ENCODE measurements at regions of chr16 and their contacts with region 1.

Region 1: DNA sequence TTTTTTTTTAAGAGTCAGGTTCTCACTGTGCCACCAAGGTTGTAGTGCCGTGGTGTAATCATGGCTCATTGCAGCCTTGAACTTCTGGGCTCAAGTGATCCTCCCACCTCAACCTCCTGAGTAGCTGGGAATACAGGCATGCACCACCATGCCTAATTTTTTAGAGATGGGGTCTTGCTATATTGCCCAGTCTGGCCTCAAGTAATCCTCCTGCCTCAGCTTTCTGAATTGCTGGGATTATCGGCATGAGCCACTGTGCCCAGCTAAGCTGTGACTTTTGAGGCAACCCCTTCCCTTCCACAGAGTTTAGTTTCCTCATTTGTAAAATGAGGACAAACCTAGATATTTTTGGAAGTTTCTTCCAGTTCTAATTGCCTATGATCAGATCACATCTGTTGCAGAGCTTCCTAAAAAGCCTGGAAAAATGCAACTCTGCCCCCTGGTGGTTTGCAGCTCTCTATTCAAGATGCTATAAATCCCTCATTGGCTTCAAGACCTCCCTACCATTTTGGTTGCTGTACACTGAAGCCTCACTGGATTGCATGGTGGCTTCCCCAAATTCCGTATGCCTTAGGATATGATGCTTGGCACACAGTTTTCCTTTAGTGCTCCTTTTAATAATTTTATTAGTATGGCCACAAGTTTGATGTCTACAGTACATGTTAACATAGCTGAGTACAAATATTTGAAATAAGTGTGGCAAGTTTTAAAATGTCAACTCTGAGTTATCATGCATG is 19.3 kb downstream of the GDE1 start:
- DNase-seq: peak; percentile 54
- CTCF ChIP-seq: peak; percentile 51

Region 2: DNA sequence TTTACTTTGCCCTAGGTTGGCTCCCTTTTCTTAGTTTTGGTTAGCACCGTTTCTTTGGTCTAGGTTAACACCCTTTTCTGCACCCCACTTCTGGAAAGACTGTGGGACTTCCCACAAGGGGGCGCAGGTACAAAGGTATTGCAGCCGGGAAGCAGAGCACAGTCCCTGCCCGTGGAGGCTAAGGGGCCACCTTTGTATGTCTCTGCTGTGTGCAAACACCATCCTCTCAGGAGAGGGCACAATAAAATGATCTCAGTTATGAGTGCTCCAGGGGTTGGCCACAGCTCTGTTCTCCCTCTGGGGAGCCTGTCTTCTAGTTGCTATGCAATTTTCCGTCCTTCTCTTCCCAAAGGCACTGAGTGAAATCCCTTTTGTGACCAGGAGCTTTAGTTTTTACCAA is 113.3 kb before region 1 on chr16:
- CTCF ChIA-PET with region 1: interaction called, 73 read pairs
- POLR2A ChIA-PET with region 1: no interaction called
- DNase-seq: peak; percentile 57
- CTCF ChIP-seq: peak; percentile 61

Region 3: GRCh38 chr16:19479302-19479721 is 23.3 kb before region 1 on chr16:
- CTCF ChIA-PET with region 1: interaction called, 11 read pairs
- POLR2A ChIA-PET with region 1: no interaction called
- DNase-seq: no peak
- CTCF ChIP-seq: no peak

Region 4: DNA sequence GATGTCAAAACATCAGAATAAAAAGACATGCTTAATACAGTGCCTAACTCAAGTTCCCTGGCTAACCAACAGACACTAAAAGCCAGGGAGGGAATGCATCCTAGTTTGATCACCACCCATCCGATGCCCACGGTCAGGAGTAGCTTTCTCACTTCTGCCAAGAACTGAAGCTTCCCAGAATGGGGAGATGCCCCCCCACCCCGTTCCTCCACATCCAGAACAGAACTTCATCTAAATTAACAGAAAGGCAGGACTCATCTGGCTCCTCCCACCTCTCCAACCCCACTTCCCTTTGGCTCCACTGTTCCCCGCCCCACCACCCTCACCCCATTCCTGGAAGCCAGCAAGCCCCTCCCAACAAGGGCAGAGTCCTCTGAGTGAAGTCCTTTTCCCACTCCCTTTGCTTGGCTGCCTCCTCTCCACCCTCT is 14.3 kb before region 1 on chr16:
- CTCF ChIA-PET with region 1: interaction called, 15 read pairs
- POLR2A ChIA-PET with region 1: no interaction called
- DNase-seq: no peak
- CTCF ChIP-seq: no peak

Region 5: DNA sequence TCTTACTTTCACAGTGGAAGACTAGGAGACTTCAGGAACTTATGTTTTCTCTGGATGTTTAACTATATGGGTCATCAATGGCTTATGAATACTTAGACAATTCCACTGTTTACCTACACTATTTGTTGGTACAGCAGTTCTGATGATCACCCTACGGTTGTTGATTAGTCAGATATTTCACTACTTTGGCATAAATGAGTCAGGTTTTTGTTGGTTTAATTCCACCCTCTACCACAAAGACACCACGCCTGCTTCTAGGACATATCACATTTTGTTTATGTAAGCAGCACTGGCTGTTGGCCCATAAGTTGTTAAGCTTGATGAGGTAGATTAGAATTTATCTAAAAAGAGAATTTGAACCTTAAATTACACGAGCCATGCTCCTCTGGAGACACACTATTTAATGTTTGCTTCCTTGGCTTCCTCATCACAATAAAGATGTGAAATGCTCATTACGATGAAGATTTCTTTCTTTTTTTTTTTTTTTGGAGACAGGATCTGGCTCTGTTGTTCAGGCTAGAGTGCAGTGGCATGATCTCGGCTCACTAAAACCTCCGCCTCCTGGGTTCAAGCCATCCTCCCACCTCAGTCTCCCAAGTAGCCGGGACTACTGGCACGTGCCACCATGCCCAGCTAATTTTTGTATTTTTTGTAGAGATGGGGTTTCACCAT is 15.0 kb after region 1 on chr16:
- CTCF ChIA-PET with region 1: interaction called, 25 read pairs
- POLR2A ChIA-PET with region 1: no interaction called
- DNase-seq: no peak
- CTCF ChIP-seq: no peak

Region 6: DNA sequence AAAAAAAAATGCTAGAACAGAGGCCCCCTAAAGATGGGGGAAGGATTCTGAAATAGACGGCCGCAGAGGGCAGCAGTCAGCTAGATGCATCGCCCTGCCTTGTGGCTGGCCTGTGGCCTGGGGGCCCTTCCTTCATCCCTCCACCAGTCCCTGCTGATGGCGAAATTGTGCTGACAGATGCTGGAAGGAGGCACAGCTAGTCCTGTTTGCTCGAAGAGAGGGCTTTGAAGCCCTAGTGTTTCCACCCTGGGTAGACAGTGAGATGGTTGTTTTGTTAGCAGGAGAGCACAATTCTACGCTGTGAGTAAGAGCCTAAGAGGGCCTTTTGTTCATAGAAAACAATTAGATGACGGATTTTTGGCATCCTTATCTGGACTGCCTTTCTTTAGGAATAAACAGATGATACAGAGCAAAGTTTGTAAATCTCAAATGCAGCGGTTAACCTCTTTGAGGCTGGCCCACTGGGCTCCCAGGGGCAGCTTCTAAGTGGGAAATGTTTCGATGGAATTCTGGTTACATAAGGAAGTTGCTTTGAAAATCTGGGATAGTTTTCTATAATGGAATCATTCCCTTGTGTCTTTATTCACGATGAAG is 75.9 kb after region 1 on chr16:
- CTCF ChIA-PET with region 1: no interaction called
- POLR2A ChIA-PET with region 1: no interaction called
- DNase-seq: no peak
- CTCF ChIP-seq: no peak

Measured in GM10248 (cell line).